PC-9 (cell line): ENCODE measurements at regions of chr3 and their contacts with region 1.

Region 1: GRCh38 chr3:100537622-100538338 is 45.4 kb downstream of the TMEM45A start:
- DNase-seq: peak; percentile 33 to 80
- H3K4me3 ChIP-seq: no peak overlapping the region
- H3K27ac ChIP-seq: peak overlapping the region; percentile 47
- H3K4me1 ChIP-seq: peaks cover 47% of the 10 kb centered on the region
- H3K27me3 ChIP-seq: no peaks in the 10 kb centered on the region
- CTCF ChIP-seq: no peak

Region 2: DNA sequence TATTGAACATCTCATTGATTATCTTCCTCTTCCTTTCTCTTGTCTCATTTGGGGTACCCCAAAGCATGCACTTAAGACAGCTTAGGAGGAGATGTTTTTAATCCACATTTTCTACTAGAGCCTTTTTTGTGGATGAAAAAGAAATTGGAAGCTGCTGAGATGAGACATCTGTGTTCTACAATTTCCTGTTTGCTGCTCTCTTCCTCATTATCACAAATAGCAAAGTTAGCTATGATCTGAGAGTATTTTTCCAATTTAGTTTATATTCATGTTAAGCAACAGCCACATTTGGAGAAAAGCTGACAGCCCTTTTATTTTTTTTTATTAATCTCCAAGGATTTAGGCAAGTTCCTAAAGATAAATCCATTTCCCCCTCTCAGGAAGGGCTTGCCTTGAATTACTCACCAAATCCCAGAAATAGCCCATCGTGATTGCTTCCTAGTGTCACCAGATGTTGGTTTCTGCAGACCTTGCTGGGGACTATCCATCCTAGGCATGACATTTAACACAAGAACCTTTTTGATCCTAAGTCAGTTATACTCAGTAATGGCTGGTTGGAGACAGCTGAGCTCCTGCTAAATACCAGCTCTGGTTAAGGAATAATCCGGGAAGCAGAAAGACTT is 352.7 kb before region 1 on chr3:
- CTCF ChIA-PET with region 1: no interaction called
- POLR2A ChIA-PET with region 1: no interaction called
- intact Hi-C with region 1: no loop called
- DNase-seq: no peak
- H3K4me3 ChIP-seq: no peak overlapping the region
- H3K27ac ChIP-seq: no peak overlapping the region
- H3K4me1 ChIP-seq: no peaks in the 10 kb centered on the region; the same call in 1 of the 2 replicates
- H3K27me3 ChIP-seq: no peaks in the 10 kb centered on the region
- CTCF ChIP-seq: no peak

Region 3: GRCh38 chr3:100297784-100298183 is 240.0 kb before region 1 on chr3:
- CTCF ChIA-PET with region 1: no interaction called
- POLR2A ChIA-PET with region 1: no interaction called
- intact Hi-C with region 1: no loop called
- DNase-seq: no peak
- H3K4me3 ChIP-seq: no peak overlapping the region
- H3K27ac ChIP-seq: no peak overlapping the region
- H3K4me1 ChIP-seq: no peaks in the 10 kb centered on the region
- H3K27me3 ChIP-seq: no peaks in the 10 kb centered on the region
- CTCF ChIP-seq: no peak

Region 4: GRCh38 chr3:100525753-100526612 is 11.8 kb before region 1 on chr3:
- CTCF ChIA-PET with region 1: interaction called, 4 read pairs
- POLR2A ChIA-PET with region 1: interaction called, 7 read pairs
- intact Hi-C with region 1: loop called (anchors 1 kb)
- DNase-seq: peak; percentile 82 to 99
- H3K4me3 ChIP-seq: peak overlapping the region; percentile 30; the same call in 1 of the 2 replicates
- H3K27ac ChIP-seq: peak overlapping the region; percentile 86
- H3K4me1 ChIP-seq: peaks cover 26% of the 10 kb centered on the region
- H3K27me3 ChIP-seq: no peaks in the 10 kb centered on the region
- CTCF ChIP-seq: no peak